H1 (cell line): ENCODE measurements at regions of chr1 and their contacts with region 1.

Region 1: DNA sequence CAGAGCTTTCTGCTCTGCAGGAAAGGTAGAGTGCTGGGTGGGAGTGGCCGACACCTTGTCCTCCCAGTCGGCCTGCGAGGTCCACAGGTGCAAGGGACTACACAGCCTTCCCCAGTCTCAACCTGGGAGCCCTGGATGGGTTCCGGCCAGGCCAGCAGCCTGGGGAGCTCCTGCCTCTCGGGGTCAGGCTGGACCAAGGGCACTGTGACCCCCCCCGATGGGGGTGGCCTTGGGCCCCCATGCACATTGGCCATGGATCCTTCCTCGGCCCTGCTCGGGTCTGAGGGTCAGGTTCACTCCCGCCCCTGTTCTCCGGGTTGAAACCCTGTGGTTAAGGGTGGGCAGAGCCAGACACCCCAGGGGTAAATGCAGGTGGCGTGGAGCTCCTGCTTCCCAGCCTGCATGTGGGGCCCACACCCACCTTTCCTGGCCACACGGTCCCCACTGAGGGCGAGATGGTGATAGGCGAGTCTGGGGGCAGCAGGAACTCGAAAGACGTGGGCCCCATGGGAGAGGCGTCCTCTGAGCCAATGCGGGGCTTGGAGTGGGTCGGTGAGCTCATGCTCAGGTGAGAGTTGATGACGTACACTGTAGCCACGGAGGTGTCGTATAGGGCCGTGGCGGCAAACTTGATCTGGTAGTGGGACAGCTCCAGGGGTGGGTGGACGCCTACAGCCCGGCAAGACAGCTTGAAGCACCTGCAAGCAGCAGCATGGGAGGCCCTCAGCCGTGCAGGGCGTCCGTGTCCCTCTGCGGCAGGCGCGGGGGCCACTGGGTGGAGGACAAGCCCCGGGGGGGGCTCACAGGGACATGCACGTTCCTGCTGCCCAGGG is 10.8 kb upstream of the TMEM52 start:
- DNase-seq: no peak
- H3K4me3 ChIP-seq: no peak overlapping the region
- H3K27ac ChIP-seq: no peak overlapping the region
- H3K4me1 ChIP-seq: no peaks in the 10 kb centered on the region
- H3K27me3 ChIP-seq: no peaks in the 10 kb centered on the region; a peak in 1 of 7 replicates
- CTCF ChIP-seq: no peak
- EP300 ChIP-seq: no peak
- POLR2A ChIP-seq: no peak
- RAD21 ChIP-seq: no peak

Region 2: GRCh38 chr1:1919304-1920056 is 10.4 kb before region 1 on chr1:
- CTCF ChIA-PET with region 1: interaction called, 3 read pairs
- POLR2A ChIA-PET with region 1: interaction called, 14 read pairs
- DNase-seq: peak; percentile 100
- H3K4me3 ChIP-seq: peak overlapping the region in 3 of 4 experiments; percentile 34 to 68 (median 40); a peak in 6 of 8 replicates
- H3K27ac ChIP-seq: no peak overlapping the region
- H3K4me1 ChIP-seq: peaks cover 0 to 19% (median 12%) of the 10 kb centered on the region in 4 experiments; a peak in 6 of 7 replicates
- H3K27me3 ChIP-seq: peaks cover 0 to 2% (median under 1%) of the 10 kb centered on the region in 4 experiments; a peak in 2 of 7 replicates
- CTCF ChIP-seq: no peak
- EP300 ChIP-seq: no peak
- POLR2A ChIP-seq: no peak; a peak in 1 of 3 replicates
- RAD21 ChIP-seq: no peak

Region 3: GRCh38 chr1:1973716-1974642 is 44.1 kb after region 1 on chr1:
- CTCF ChIA-PET with region 1: no interaction called
- POLR2A ChIA-PET with region 1: no interaction called
- DNase-seq: no peak
- H3K4me3 ChIP-seq: no peak overlapping the region
- H3K27ac ChIP-seq: no peak overlapping the region
- H3K4me1 ChIP-seq: no peaks in the 10 kb centered on the region
- H3K27me3 ChIP-seq: no peaks in the 10 kb centered on the region
- CTCF ChIP-seq: no peak
- EP300 ChIP-seq: no peak
- POLR2A ChIP-seq: no peak
- RAD21 ChIP-seq: no peak